Naive thymus-derived CD8-positive, alpha-beta T cell (primary cell): ENCODE measurements at regions of chr17 and their contacts with region 1.

Region 1: GRCh38 chr17:44218344-44219107 is 949 bp downstream of the UBTF start:
- DNase-seq: peak; percentile 82 to 93 (median 88)
- ATAC-seq: peak; percentile 38 to 42
- H3K4me3 Mint-ChIP-seq: peak overlapping the region; percentile 85 to 100 (median 90)
- H3K27ac Mint-ChIP-seq: peak overlapping the region; percentile 51 to 99 (median 98)
- H3K4me1 Mint-ChIP-seq: peaks cover 38 to 64% (median 54%) of the 10 kb centered on the region in 4 donors
- H3K27me3 Mint-ChIP-seq: no peaks in the 10 kb centered on the region

Region 2: GRCh38 chr17:44108440-44109324 is 109.8 kb before region 1 on chr17:
- POLR2A ChIA-PET with region 1: no interaction called
- DNase-seq: no peak
- ATAC-seq: no peak
- H3K4me3 Mint-ChIP-seq: no peak overlapping the region
- H3K27ac Mint-ChIP-seq: peak overlapping the region in 1 of 10 donors; percentile 21
- H3K4me1 Mint-ChIP-seq: peaks cover 28 to 43% (median 38%) of the 10 kb centered on the region in 4 donors
- H3K27me3 Mint-ChIP-seq: no peaks in the 10 kb centered on the region

Region 3: GRCh38 chr17:44176257-44176656 is 42.3 kb before region 1 on chr17:
- POLR2A ChIA-PET with region 1: no interaction called
- DNase-seq: no peak
- ATAC-seq: no peak
- H3K4me3 Mint-ChIP-seq: no peak overlapping the region
- H3K27ac Mint-ChIP-seq: peak overlapping the region in 4 of 10 donors; percentile 17 to 76 (median 62)
- H3K4me1 Mint-ChIP-seq: peaks cover 0 to 6% (median 3%) of the 10 kb centered on the region in 4 donors
- H3K27me3 Mint-ChIP-seq: no peaks in the 10 kb centered on the region

Region 4: DNA sequence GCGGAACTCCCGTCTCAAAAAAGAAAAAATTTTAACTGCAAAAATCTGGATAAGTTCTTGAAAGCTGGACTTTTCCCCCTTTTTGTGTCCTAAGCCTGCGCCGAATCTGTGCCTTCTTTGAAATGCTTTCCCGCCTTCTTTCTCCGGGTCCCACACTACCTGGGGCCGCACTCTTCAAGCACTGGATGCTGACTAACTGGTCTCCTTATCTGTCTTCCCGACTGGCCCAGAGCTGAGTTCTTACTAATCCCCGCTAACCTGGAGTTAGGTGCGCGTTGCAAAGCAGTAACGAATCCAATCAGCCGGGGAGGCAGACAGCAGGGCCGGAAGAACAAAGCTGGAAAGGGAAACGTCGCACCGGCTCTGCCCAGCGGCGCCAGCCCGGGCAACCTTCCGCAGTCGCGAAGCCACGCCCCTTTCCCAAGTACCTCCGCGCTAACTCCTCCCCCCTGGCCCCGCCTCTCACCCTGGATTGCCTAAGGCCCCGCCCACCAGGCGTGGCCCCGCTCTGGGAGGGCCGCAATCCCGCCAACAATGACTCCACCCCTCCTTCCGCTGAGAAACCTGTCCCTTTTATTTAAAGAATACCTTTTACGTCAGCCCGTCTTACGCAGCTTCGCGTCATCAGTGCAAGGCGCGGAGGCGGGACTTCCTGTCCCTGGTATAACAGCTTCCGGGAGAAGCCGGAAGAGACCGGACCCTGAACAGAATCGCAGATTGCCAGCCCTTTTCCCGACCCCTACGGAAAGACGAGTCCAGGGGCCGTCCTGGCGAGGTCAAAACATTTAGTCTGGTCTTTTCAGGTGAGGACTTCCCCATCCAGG is 32.0 kb before region 1 on chr17 and contains the start of gene TMUB2:
- POLR2A ChIA-PET with region 1: interaction called, 101 read pairs
- DNase-seq: peak; percentile 98 to 100 (median 99)
- ATAC-seq: peak; percentile 88 to 90
- H3K4me3 Mint-ChIP-seq: peak within 1 kb of the TSS; percentile 95 to 100 (median 99)
- H3K27ac Mint-ChIP-seq: peak within 1 kb of the TSS; percentile 98 to 100 (median 100)
- H3K4me1 Mint-ChIP-seq: peaks cover 23 to 58% (median 49%) of the 10 kb centered on the region in 4 donors
- H3K27me3 Mint-ChIP-seq: no peaks in the 10 kb centered on the region
- polyA plus RNA-seq, gene TMUB2: 22.1 to 30.2 (median 25.5) TPM

Region 5: DNA sequence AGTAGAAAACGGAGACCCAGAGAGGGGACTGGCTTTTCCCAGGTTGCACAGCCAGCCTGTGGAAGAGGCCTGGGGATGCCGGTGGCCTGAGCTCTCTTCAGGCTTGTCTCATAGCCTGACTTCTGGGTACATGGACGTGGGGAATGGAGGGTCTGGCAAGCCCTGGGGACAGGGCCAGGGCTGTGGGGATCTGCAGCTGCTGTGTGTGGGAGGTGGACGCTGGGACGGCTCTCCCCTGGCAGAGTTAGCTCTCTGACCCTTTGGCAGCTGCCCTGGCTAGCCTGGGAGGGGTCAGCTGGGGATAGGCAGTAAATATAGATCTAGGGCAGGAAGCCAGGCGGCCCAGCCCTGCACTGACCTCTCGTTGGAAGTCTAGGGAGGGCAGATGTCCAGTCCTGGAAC is 28.9 kb after region 1 on chr17:
- POLR2A ChIA-PET with region 1: interaction called, 82 read pairs
- DNase-seq: no peak
- ATAC-seq: no peak
- H3K4me3 Mint-ChIP-seq: peak overlapping the region in 4 of 10 donors; percentile 1 to 75 (median 64)
- H3K27ac Mint-ChIP-seq: peak overlapping the region in 9 of 10 donors; percentile 71 to 96 (median 86)
- H3K4me1 Mint-ChIP-seq: peaks cover 22 to 60% (median 57%) of the 10 kb centered on the region in 4 donors
- H3K27me3 Mint-ChIP-seq: no peaks in the 10 kb centered on the region

Region 6: DNA sequence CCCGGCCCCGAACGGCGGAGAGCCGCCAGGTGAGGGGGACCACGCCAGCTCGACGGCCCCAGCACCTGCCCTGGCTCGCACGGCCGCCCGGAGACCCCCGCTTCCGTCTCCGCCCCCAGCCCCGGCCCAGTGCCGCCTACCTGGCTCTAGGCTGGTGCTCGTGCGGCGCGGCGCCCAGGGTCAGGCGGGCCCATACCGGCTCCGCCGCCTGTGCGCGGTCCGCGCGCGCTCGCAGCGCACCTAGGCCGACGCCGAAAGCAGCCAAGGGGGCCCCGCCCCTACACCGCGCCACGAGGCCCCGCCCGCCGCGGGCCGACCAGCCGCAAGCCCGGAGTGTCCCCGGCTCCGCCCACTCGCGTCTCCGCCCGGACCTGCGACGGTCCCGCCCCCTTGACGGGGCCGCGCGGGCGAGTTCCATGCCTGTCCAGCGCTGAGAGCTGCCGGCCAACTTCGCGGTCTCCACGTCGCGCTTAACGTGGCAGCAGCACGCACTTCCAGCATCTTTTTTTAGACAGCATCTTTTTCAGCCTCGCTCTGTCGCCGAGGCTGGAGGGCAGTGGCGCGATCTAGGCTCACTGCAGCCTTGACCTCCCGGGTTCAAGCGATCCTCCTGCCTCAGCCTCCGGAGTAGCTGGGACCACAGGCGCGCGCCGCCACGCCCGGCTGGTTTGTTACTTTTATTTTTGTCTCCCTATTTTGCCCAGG is 106.2 kb after region 1 on chr17 and contains the start of gene SLC25A39:
- POLR2A ChIA-PET with region 1: interaction called, 445 read pairs
- DNase-seq: peak; percentile 88 to 98 (median 95)
- ATAC-seq: peak; percentile 70 to 75
- H3K4me3 Mint-ChIP-seq: peak within 1 kb of the TSS; percentile 88 to 95 (median 92)
- H3K27ac Mint-ChIP-seq: peak within 1 kb of the TSS; percentile 90 to 98 (median 96)
- H3K4me1 Mint-ChIP-seq: peaks cover 6 to 42% (median 16%) of the 10 kb centered on the region in 4 donors
- H3K27me3 Mint-ChIP-seq: no peaks in the 10 kb centered on the region
- polyA plus RNA-seq, gene SLC25A39: 133 to 176 (median 162) TPM

Region 7: DNA sequence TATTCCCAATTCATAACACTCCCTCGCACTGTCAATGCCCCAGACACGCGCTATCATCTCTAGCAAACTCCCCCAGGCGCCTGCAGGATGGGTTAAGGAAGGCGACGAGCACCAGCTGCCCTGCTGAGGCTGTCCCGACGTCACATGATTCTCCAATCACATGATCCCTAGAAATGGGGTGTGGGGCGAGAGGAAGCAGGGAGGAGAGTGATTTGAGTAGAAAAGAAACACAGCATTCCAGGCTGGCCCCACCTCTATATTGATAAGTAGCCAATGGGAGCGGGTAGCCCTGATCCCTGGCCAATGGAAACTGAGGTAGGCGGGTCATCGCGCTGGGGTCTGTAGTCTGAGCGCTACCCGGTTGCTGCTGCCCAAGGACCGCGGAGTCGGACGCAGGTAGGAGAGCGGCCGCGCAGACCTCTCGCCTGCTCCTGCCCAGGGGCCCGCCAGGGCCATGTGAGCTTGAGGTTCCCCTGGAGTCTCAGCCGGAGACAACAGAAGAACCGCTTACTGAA is 126.5 kb after region 1 on chr17 and contains the start of gene GRN:
- POLR2A ChIA-PET with region 1: interaction called, 35 read pairs
- DNase-seq: peak; percentile 68 to 90 (median 82)
- ATAC-seq: peak; percentile 98 to 99
- H3K4me3 Mint-ChIP-seq: peak within 1 kb of the TSS; percentile 84 to 99 (median 94)
- H3K27ac Mint-ChIP-seq: peak within 1 kb of the TSS in 9 of 10 donors; percentile 67 to 88 (median 82)
- H3K4me1 Mint-ChIP-seq: peaks cover 16 to 37% (median 23%) of the 10 kb centered on the region in 4 donors
- H3K27me3 Mint-ChIP-seq: peaks cover 0 to 3% (median 0%) of the 10 kb centered on the region in 5 donors
- polyA plus RNA-seq, gene GRN: 24.8 to 43.7 (median 41.6) TPM